PC-9 (cell line): ENCODE measurements at regions of chr3 and their contacts with region 1.

Region 1: GRCh38 chr3:195117978-195118581 is 152.9 kb downstream of the XXYLT1 start:
- DNase-seq: peak; percentile 94 to 97
- H3K4me3 ChIP-seq: peak overlapping the region; percentile 23; the same call in 1 of the 2 replicates
- H3K27ac ChIP-seq: peak overlapping the region; percentile 82
- H3K4me1 ChIP-seq: peaks cover 51% of the 10 kb centered on the region
- H3K27me3 ChIP-seq: no peaks in the 10 kb centered on the region
- CTCF ChIP-seq: peak; percentile 63

Region 2: DNA sequence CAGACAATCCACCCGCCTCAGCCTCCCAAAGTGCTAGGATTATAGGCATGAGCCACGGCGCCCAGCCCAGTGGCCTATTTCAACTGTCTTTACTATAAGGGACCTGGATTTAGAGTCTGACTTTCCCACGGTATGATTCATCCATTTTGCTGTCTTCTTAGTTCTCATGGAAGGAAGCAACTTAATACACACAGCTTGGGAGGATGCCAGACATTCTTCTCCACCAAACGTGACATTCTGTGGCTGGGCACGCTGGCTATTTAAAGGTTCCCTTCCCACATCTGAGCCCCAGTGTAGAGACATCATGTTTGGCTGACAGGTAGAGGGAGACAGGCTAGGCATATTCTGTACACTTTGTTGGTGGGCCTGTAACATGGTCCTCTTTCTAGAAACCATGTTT is 406.2 kb before region 1 on chr3:
- CTCF ChIA-PET with region 1: no interaction called
- POLR2A ChIA-PET with region 1: no interaction called
- intact Hi-C with region 1: loop called (anchors 1 kb)
- DNase-seq: peak; percentile 89 to 99
- H3K4me3 ChIP-seq: no peak overlapping the region
- H3K27ac ChIP-seq: peak overlapping the region; percentile 54
- H3K4me1 ChIP-seq: peaks cover 47% of the 10 kb centered on the region
- H3K27me3 ChIP-seq: no peaks in the 10 kb centered on the region
- CTCF ChIP-seq: no peak

Region 3: DNA sequence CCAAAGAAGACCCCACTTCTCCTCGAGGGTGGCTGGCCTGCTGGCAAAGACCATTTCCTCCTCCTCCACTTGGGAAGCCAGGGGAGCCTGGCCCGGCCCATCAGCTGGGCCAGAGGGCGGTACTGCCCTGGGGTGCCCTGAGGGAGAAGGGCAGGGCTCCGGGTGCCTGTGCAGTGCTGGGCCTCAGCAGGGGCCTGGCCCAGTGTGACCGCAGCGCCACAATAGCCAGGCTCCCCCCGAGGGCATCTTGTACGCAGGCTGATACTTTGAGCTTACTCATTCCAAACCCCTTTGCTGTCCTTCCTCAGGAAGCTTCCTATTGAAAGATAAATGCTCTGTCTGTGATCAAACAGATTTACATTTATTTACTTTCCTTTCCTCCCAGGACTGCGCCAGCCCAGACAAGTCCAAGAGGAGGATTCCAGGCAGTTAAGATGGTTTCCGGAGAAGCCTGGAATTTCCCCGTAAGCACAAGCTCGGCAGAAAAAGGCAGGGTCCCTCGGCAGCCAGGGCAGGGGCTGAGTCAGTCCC is 87.2 kb before region 1 on chr3:
- CTCF ChIA-PET with region 1: no interaction called
- POLR2A ChIA-PET with region 1: interaction called, 3 read pairs
- intact Hi-C with region 1: loop called (anchors 1 kb)
- DNase-seq: peak; percentile 98
- H3K4me3 ChIP-seq: peak overlapping the region; percentile 28; the same call in 1 of the 2 replicates
- H3K27ac ChIP-seq: peak overlapping the region; percentile 83
- H3K4me1 ChIP-seq: peaks cover 53% of the 10 kb centered on the region
- H3K27me3 ChIP-seq: no peaks in the 10 kb centered on the region
- CTCF ChIP-seq: no peak

Region 4: GRCh38 chr3:195154793-195155535 is 36.9 kb after region 1 on chr3:
- CTCF ChIA-PET with region 1: interaction called, 13 read pairs
- POLR2A ChIA-PET with region 1: no interaction called
- intact Hi-C with region 1: no loop called
- DNase-seq: peak in 1 of 2 experiments; percentile 80
- H3K4me3 ChIP-seq: no peak overlapping the region
- H3K27ac ChIP-seq: no peak overlapping the region
- H3K4me1 ChIP-seq: peaks cover 6% of the 10 kb centered on the region
- H3K27me3 ChIP-seq: no peaks in the 10 kb centered on the region
- CTCF ChIP-seq: no peak

Region 5: GRCh38 chr3:195259475-195260279 is 141.6 kb after region 1 on chr3:
- CTCF ChIA-PET with region 1: interaction called, 5 read pairs
- POLR2A ChIA-PET with region 1: interaction called, 5 read pairs
- intact Hi-C with region 1: loop called (anchors 1 kb)
- DNase-seq: peak; percentile 86 to 96
- H3K4me3 ChIP-seq: peak overlapping the region; percentile 70
- H3K27ac ChIP-seq: peak overlapping the region; percentile 74
- H3K4me1 ChIP-seq: peaks cover 13% of the 10 kb centered on the region
- H3K27me3 ChIP-seq: no peaks in the 10 kb centered on the region
- CTCF ChIP-seq: no peak